ENCODE measurements at regions of chr11 and their contacts with region 1.

Region 1: GRCh38 chr11:128630367-128631230 is 43.2 kb upstream of the ETS1 start:
- DNase-seq: peak; percentile 95
- ATAC-seq: peak; percentile 78
- H3K4me3 Mint-ChIP-seq: peak overlapping the region; percentile 72
- H3K27ac Mint-ChIP-seq: peak overlapping the region; percentile 84
- H3K4me1 Mint-ChIP-seq: peaks cover 69% of the 10 kb centered on the region
- H3K27me3 Mint-ChIP-seq: peaks cover under 1% of the 10 kb centered on the region

Region 2: GRCh38 chr11:128172046-128172878 is 458.3 kb before region 1 on chr11:
- CTCF ChIA-PET with region 1: interaction called, 206 read pairs
- POLR2A ChIA-PET with region 1: interaction called, 6 read pairs
- DNase-seq: peak; percentile 91
- ATAC-seq: peak; percentile 86
- H3K4me3 Mint-ChIP-seq: no peak overlapping the region
- H3K27ac Mint-ChIP-seq: no peak overlapping the region
- H3K4me1 Mint-ChIP-seq: no peaks in the 10 kb centered on the region
- H3K27me3 Mint-ChIP-seq: peaks cover 11% of the 10 kb centered on the region

Region 3: DNA sequence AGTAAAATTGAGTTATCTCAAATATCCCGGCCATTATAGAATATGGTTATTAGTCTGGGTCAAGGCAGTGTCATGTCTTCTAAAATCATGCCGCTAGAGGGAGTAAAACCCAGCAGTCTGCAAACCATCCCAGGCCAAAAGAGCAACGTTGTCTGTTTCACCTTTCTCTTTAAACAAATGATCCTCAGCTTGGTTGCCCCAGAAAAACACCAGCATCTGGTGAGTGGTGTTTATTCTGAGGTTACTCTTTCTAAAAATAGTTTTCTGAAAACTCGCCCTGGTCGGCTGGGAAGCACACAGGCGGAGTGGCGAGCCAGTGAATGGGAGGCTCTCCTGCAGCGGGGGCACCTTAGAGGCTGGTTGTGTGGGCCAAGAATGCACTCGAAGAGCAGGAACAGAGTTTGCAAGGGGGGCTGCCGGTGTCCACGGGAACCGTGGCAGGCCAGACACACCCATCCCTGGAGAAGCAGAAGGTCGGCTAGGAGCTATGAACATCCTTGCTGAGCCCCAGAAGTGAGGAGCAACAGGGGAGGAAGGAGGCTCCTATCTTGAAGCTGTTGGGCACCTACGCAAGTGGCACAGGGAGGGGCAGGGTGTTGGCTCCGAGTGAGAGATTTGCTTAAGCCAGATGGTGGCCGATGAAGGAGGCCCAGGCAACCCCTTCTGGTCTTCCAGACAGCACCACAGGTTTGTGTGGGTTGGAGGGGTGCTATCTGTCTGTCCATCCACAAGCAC is 340.3 kb before region 1 on chr11:
- CTCF ChIA-PET with region 1: interaction called, 204 read pairs
- POLR2A ChIA-PET with region 1: interaction called, 43 read pairs
- DNase-seq: peak; percentile 87
- ATAC-seq: peak; percentile 76
- H3K4me3 Mint-ChIP-seq: peak overlapping the region; percentile 96
- H3K27ac Mint-ChIP-seq: peak overlapping the region; percentile 84
- H3K4me1 Mint-ChIP-seq: peaks cover 90% of the 10 kb centered on the region
- H3K27me3 Mint-ChIP-seq: no peaks in the 10 kb centered on the region

Region 4: GRCh38 chr11:128463371-128463829 is 167.2 kb before region 1 on chr11:
- CTCF ChIA-PET with region 1: interaction called, 118 read pairs
- POLR2A ChIA-PET with region 1: interaction called, 8 read pairs
- DNase-seq: no peak
- ATAC-seq: no peak
- H3K4me3 Mint-ChIP-seq: no peak overlapping the region
- H3K27ac Mint-ChIP-seq: peak overlapping the region; percentile 91
- H3K4me1 Mint-ChIP-seq: peaks cover 87% of the 10 kb centered on the region
- H3K27me3 Mint-ChIP-seq: no peaks in the 10 kb centered on the region

Region 5: GRCh38 chr11:128497061-128497775 is 133.4 kb before region 1 on chr11:
- CTCF ChIA-PET with region 1: interaction called, 212 read pairs
- POLR2A ChIA-PET with region 1: no interaction called
- DNase-seq: no peak
- ATAC-seq: no peak
- H3K4me3 Mint-ChIP-seq: peak overlapping the region; percentile 73
- H3K27ac Mint-ChIP-seq: peak overlapping the region; percentile 81
- H3K4me1 Mint-ChIP-seq: peaks cover 95% of the 10 kb centered on the region
- H3K27me3 Mint-ChIP-seq: no peaks in the 10 kb centered on the region

Region 6: GRCh38 chr11:128610721-128611617 is 19.6 kb before region 1 on chr11:
- CTCF ChIA-PET with region 1: interaction called, 99 read pairs
- POLR2A ChIA-PET with region 1: interaction called, 25 read pairs
- DNase-seq: peak; percentile 69
- ATAC-seq: peak; percentile 90
- H3K4me3 Mint-ChIP-seq: peak overlapping the region; percentile 61
- H3K27ac Mint-ChIP-seq: peak overlapping the region; percentile 83
- H3K4me1 Mint-ChIP-seq: peaks cover 42% of the 10 kb centered on the region
- H3K27me3 Mint-ChIP-seq: no peaks in the 10 kb centered on the region